Activated naive CD4-positive, alpha-beta T cell treated with anti-CD3 and anti-CD28 coated beads for 36 hours (primary cell): ENCODE measurements at regions of chr10 and their contacts with region 1.

Region 1: GRCh38 chr10:35462491-35462934 is 126.2 kb downstream of the CCNY start:
- DNase-seq: no peak
- H3K4me3 Mint-ChIP-seq: no peak overlapping the region
- H3K27ac Mint-ChIP-seq: no peak overlapping the region
- H3K4me1 Mint-ChIP-seq: peaks cover 57% of the 10 kb centered on the region
- H3K27me3 Mint-ChIP-seq: no peaks in the 10 kb centered on the region

Region 2: DNA sequence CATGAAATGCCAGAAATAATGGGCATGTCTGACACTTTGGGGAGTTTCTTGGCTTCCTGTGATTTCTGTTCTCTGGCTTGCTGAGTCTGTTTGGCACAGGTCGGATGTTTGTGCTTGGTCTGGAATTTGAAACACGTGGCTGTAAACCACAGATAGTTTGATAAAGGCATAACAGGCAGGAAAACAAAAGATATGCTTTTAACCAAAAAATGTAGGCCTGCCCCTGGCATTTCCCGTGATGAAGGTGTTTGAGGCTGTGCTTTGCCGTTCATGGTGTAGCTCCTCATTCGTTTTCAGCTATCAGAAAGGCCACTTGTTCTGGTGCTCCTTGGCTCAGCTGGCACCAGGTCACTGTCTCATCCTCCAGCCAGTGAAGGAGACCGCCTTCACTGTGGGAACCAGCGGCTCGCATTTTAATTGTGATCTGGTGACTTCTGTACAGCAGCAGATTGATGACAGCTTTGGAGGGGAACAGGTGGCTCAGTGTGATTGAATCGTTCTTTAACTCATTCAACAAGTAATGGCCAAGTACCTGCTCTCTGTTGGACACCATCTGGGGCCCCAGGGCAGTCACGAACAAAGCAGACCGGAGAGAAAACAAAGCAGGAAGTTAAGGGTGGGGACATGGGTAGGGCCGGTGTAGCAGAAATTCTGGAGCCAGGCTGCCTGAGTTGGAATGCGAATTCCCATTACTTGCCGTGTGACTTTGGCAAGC is 14.7 kb before region 1 on chr10:
- CTCF ChIA-PET with region 1: interaction called, 6 read pairs
- intact Hi-C with region 1: loop called (anchors 2 kb)
- DNase-seq: peak; percentile 47
- H3K4me3 Mint-ChIP-seq: peak overlapping the region; percentile 52
- H3K27ac Mint-ChIP-seq: peak overlapping the region; percentile 80
- H3K4me1 Mint-ChIP-seq: peaks cover 72% of the 10 kb centered on the region
- H3K27me3 Mint-ChIP-seq: no peaks in the 10 kb centered on the region